ENCODE measurements at regions of chr12 and their contacts with region 1.

Region 1: DNA sequence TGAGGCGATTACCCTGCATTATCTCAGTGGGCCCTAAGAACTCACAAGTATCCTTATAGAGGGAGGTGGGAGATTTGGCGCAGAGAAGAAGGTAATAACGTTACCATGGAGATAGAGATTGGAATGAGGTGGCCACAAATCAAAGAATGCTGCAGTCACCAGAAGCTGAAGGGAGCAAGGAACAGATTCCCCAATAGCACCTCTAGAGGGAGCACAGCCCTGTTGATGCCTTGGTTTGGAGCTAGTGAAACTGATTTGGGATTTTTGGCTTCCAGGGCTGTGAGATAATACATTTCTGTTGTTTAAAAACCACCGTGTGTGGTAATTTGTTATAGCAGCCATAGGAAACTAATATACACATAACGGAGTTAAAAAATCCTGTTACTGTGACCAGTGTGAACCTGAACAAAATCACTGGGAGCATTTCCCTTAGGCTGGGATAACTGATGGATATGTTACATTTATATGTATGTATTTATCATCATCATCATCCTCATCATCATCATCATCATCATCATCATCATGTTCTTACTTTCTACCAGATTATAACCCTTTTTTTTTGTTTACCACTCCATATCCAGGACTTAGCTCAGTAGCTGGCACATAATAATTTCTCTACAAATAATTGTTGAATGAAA is 100.3 kb downstream of the LIN7A start:
- DNase-seq: peak; percentile 45
- H3K4me3 Mint-ChIP-seq: no peak overlapping the region
- H3K27ac Mint-ChIP-seq: no peak overlapping the region
- H3K4me1 Mint-ChIP-seq: no peaks in the 10 kb centered on the region
- H3K27me3 Mint-ChIP-seq: no peaks in the 10 kb centered on the region
- CTCF ChIP-seq: peak; percentile 64

Region 2: DNA sequence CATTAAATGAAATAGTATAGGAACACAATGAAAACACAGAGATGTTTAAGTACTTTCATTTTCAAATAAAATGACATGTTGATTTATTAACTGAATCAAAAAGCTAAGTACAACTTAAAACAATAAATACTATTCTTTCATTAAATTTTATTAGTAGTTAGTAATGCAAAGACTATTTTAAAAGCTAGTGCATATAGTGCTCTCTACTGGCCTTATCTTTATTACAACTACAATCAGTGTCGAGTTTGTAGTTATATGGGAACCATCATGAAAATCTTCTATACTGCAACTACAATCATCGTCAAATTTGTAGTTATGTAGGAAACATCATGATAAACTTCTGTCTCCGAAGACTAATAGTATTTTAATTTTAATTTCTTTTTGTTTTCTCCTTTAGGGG is 109.1 kb after region 1 on chr12:
- CTCF ChIA-PET with region 1: interaction called, 10 read pairs
- intact Hi-C with region 1: loop called (anchors 1 kb)
- DNase-seq: no peak
- H3K4me3 Mint-ChIP-seq: no peak overlapping the region
- H3K27ac Mint-ChIP-seq: no peak overlapping the region
- H3K4me1 Mint-ChIP-seq: peaks cover 7% of the 10 kb centered on the region
- H3K27me3 Mint-ChIP-seq: no peaks in the 10 kb centered on the region
- CTCF ChIP-seq: no peak

Region 3: DNA sequence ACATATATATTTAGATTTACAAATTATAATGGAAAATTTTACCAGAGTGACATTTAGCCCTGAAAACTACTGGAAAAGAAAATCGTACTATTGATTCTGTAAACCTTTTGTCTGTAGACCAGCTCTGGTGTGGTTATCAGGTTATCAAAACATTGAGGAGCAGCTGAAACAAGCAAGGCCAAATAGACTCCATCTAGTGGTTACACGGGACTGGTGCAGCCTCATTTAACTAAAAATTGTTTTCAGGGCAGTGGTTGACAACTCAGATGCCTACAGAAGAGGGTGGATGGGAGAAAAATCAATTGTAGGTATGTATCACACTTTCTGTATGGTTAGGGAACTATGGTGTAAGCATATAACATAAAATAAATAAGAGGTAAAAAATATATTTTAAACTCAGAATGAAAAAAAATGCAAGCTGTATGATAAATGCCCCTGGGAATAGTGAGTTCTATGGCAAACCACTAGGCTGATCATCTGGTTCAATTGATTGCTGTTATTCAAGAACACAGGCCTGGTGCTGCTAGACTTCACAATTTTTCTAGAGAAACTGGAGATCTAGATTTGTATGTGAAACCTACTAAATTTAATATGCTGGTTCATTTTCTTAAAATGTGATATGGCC is 291.6 kb after region 1 on chr12:
- CTCF ChIA-PET with region 1: interaction called, 6 read pairs
- intact Hi-C with region 1: loop called (anchors 5 kb)
- DNase-seq: peak; percentile 34
- H3K4me3 Mint-ChIP-seq: no peak overlapping the region
- H3K27ac Mint-ChIP-seq: no peak overlapping the region
- H3K4me1 Mint-ChIP-seq: no peaks in the 10 kb centered on the region
- H3K27me3 Mint-ChIP-seq: no peaks in the 10 kb centered on the region
- CTCF ChIP-seq: peak; percentile 52

Measured in Calu3 (cell line).